Astrocyte of the cerebellum (primary cell): ENCODE measurements at regions of chr10 and their contacts with region 1.

Region 1: DNA sequence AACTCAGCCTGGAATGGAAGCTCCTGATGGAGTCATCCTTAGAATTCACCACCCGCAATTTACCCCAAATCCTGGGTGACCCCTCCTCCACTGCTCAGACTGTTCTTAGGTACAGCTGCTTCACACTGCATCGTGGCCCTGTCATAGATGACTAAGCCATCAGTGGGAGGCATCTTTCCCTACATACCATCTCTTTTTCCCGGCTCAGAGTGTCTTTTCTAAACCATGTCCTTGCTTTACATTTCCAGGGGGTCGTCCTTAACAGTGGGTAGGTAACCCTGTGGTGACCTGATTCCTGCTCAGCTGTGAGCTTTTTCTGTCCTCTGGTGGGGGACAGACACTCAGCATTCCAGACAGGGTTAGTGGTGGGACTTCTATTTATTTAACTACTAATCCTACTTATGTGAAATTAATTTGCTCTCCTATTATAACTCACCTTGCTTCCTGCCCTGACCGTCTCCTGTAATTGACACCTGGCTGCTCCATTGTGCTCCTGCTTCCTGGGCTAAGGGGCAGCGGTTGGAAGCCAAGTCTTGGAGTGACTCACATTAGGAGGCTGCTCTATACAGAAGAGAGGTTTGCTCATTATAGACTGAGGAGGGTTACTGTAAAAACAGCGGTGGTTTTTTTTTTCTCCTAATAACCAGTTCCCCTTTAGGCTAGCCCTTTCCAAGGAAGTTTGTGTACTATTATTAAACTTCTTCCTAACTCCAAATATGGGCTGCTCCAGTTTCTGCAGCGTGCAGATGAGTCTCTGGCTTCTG is 40.6 kb downstream of the PYROXD2 start:
- DNase-seq: no peak
- H3K4me3 ChIP-seq: no peak overlapping the region
- CTCF ChIP-seq: no peak

Region 2: GRCh38 chr10:98259606-98260315 is 114.6 kb before region 1 on chr10:
- in situ Hi-C with region 1: loop called (anchors 10 kb)
- DNase-seq: no peak
- H3K4me3 ChIP-seq: no peak overlapping the region
- CTCF ChIP-seq: no peak

Region 3: GRCh38 chr10:98425511-98426352 is 51.3 kb after region 1 on chr10:
- in situ Hi-C with region 1: no loop called
- DNase-seq: no peak
- H3K4me3 ChIP-seq: no peak overlapping the region
- CTCF ChIP-seq: peak; percentile 61